Activated CD4-positive, alpha-beta memory T cell treated with anti-CD3 and anti-CD28 coated beads, Interleukin-2, amount 10 ng/mL, durations not matched to agents 7 days and 5 days (primary cell): ENCODE measurements at regions of chr7 and their contacts with region 1.

Region 1: GRCh38 chr7:150876817-150877526 is 24.7 kb downstream of the AOC1 start:
- DNase-seq: peak; percentile 37
- H3K4me3 Mint-ChIP-seq: no peak overlapping the region
- H3K27ac Mint-ChIP-seq: no peak overlapping the region
- H3K4me1 Mint-ChIP-seq: peaks cover 3% of the 10 kb centered on the region
- H3K27me3 Mint-ChIP-seq: peaks cover 54% of the 10 kb centered on the region

Region 2: DNA sequence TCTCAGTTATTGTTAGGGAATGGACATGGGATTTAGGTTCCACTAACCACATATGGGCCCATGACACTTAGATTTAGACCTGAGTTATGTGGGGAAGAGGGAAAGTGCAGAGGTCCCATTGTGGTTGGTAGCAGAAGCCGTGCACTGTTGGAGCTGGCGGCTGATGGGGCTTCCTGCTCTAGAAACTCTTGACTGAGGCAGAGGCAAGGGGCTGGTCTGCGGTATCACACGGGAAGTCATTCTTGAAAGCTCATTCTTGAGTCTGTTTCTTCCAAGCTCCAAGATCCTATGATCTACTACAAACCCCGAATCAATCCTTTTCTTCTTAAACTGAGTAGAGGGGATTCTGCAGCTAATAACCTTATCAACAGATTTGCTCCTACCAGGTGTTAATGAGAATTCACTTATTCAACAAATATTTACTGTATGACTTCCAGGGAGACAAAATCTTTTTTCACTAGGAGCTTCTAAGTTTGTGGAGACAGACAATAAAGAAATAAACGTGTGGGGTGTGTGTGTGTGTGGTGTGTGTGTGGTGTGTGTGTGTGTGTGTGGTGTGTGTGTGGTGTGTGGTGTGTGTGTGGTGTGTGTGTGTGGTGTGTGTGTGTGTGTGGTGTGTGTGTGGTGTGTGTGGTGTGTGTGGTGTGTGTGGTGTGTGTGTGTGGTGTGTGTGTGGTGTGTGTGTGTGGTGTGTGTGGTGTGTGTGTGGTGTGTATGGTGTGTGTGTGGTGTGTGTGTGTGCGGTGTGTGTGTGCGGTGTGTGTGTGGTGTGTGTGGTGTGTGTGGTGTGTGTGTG is 32.4 kb after region 1 on chr7:
- CTCF ChIA-PET with region 1: interaction called, 10 read pairs
- POLR2A ChIA-PET with region 1: no interaction called
- DNase-seq: peak; percentile 70
- H3K4me3 Mint-ChIP-seq: peak overlapping the region; percentile 4
- H3K27ac Mint-ChIP-seq: peak overlapping the region; percentile 29
- H3K4me1 Mint-ChIP-seq: peaks cover 8% of the 10 kb centered on the region
- H3K27me3 Mint-ChIP-seq: peaks cover 37% of the 10 kb centered on the region

Region 3: DNA sequence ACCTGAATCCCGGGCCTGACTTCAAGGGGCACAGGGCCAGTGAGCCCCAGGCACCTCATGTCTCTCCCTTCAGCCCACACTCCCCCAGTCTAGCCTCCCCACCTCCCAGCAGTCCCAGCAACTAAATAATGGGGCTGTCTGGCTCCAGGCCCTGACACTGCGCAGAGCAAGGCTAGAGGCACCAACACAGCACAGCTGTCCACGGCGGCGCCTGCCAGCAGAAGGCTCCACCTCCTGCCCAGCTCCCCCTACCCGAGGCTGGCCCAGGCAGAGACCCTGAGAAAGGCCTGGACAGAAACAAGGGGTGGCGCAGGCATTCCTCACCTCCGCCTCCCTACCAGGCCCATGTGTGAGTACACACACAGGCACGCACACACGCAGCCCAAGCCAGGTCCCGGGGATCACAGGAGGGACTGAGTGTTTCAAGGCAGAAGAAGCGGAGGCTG is 95.1 kb after region 1 on chr7:
- CTCF ChIA-PET with region 1: no interaction called
- POLR2A ChIA-PET with region 1: no interaction called
- DNase-seq: no peak
- H3K4me3 Mint-ChIP-seq: no peak overlapping the region
- H3K27ac Mint-ChIP-seq: no peak overlapping the region
- H3K4me1 Mint-ChIP-seq: peaks cover 23% of the 10 kb centered on the region
- H3K27me3 Mint-ChIP-seq: peaks cover 19% of the 10 kb centered on the region